HCT116 (cell line): ENCODE measurements at regions of chr7 and their contacts with region 1.

Region 1: DNA sequence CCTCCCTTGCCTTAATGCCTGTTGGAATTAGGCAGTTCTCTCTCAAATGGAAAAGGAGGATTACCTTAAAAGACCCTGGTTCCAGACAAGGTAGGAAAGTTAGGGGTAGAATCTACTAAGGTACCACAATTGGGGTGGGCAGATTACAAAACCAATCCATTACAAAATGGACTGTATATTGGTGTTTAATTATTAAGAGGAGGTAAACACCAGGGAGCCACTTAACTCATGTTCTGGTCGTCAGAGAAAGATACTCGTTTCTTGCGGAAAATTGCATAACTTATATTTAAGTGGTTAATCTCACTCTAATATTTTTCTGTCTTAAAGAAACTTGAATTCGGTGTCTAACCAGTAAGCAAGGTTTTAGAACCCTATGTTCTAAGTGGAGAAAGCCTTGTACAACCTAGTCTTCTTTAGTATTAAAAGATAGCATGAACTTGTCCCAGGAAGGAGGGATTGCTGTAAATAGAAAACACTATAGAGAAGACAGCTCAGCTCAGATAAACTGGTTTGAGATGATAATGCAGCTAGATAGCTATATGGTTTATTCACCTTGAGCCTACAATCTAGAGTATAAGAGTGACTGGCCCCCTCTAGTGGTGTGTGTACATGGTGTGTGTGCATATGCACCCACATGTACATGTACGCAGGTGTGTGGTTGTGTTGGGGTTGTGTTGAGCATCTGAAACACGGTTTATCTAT is 58.0 kb upstream of the STRIP2 start:
- DNase-seq: peak; percentile 32
- ATAC-seq: peak; percentile 100
- H3K4me3 ChIP-seq: no peak overlapping the region
- H3K27ac ChIP-seq: no peak overlapping the region
- H3K4me1 ChIP-seq: no peaks in the 10 kb centered on the region
- H3K27me3 ChIP-seq: no peaks in the 10 kb centered on the region
- CTCF ChIP-seq: peak; percentile 30 to 83 (median 81); a peak in 5 of 6 replicates
- POLR2A ChIP-seq: no peak
- RAD21 ChIP-seq: peak; percentile 47

Region 2: DNA sequence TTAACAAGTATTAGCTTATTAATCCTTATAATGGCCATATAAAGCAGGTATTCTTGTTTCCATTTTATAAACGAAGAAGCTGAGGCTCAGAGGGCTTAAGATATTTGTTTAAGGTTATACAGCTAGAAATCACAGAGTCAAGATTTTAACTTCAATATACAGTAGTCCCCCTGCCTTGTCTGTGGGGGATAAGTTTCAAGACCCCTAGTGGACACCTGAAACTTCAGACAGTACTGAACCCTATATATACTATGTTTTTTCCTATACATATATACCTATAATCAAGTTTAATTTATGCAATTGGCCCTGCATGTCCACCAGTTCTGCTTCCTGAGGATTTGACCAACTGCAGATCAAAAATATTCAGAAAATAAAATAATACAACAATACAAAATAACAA is 13.6 kb after region 1 on chr7:
- CTCF ChIA-PET with region 1: interaction called, 30 read pairs
- POLR2A ChIA-PET with region 1: no interaction called
- RAD21 ChIA-PET with region 1: no interaction called
- intact Hi-C with region 1: no loop called
- DNase-seq: no peak
- ATAC-seq: no peak
- H3K4me3 ChIP-seq: no peak overlapping the region
- H3K27ac ChIP-seq: no peak overlapping the region
- H3K4me1 ChIP-seq: no peaks in the 10 kb centered on the region
- H3K27me3 ChIP-seq: no peaks in the 10 kb centered on the region
- CTCF ChIP-seq: peak in 2 of 3 experiments; percentile 19 to 21; a peak in 2 of 6 replicates
- POLR2A ChIP-seq: no peak
- RAD21 ChIP-seq: no peak

Region 3: GRCh38 chr7:129522088-129522970 is 146.1 kb after region 1 on chr7:
- CTCF ChIA-PET with region 1: no interaction called
- POLR2A ChIA-PET with region 1: no interaction called
- RAD21 ChIA-PET with region 1: no interaction called
- intact Hi-C with region 1: no loop called
- DNase-seq: no peak
- ATAC-seq: no peak
- H3K4me3 ChIP-seq: no peak overlapping the region
- H3K27ac ChIP-seq: no peak overlapping the region
- H3K4me1 ChIP-seq: peaks cover 6 to 16% of the 10 kb centered on the region in 2 experiments
- H3K27me3 ChIP-seq: no peaks in the 10 kb centered on the region
- CTCF ChIP-seq: no peak
- POLR2A ChIP-seq: no peak
- RAD21 ChIP-seq: no peak